ENCODE measurements at regions of chr14 and their contacts with region 1.

Region 1: DNA sequence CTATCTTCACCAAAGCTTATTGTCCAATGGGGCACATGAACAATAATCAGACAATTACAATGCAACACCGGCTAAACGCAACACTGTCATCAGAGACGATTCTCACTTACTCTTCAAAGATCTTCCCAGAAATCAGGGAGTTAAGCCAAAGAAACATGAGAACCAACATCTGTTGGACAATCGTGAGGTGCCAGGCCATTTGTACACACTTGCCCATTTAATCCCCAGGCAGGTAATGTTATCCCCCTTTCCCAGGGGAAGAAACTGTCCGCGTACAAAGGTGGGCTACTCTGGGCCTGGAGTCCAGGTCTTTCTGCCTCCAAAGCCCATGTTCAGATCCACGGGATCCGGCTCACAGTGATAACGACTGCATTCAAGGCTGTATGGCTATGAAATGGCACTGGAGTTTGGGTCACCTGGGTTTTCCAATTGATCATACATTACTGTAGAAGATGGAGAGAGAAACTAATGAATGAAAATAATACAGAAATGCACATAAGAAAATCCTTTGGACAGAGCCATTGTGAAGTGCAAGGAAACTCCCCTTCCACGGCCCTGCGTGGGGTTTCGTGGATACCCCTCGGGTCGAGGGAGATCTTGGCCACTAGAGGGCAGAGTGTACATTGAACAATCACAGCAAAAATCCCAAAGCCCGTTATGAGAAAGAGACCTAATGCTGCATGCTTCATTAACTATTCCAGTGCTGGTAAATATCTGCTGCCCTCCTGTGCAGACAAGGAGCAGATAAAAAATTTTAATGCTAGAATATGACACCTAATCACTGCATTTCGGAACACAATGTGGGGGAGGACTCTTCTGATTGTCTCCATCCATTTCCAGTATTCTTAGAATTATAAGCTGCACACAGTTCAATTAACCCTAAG is 111.4 kb downstream of the EGLN3 start:
- DNase-seq: peak; percentile 56
- H3K4me3 Mint-ChIP-seq: no peak overlapping the region
- H3K27ac Mint-ChIP-seq: no peak overlapping the region
- H3K4me1 Mint-ChIP-seq: peaks cover 11% of the 10 kb centered on the region
- H3K27me3 Mint-ChIP-seq: no peaks in the 10 kb centered on the region
- CTCF ChIP-seq: peak; percentile 76

Region 2: GRCh38 chr14:34220921-34221320 is 381.5 kb after region 1 on chr14:
- CTCF ChIA-PET with region 1: interaction called, 14 read pairs
- POLR2A ChIA-PET with region 1: no interaction called
- intact Hi-C with region 1: no loop called
- DNase-seq: no peak
- H3K4me3 Mint-ChIP-seq: no peak overlapping the region
- H3K27ac Mint-ChIP-seq: no peak overlapping the region
- H3K4me1 Mint-ChIP-seq: no peaks in the 10 kb centered on the region
- H3K27me3 Mint-ChIP-seq: no peaks in the 10 kb centered on the region
- CTCF ChIP-seq: no peak

Region 3: GRCh38 chr14:34227834-34228649 is 388.6 kb after region 1 on chr14:
- CTCF ChIA-PET with region 1: interaction called, 46 read pairs
- POLR2A ChIA-PET with region 1: interaction called, 3 read pairs
- intact Hi-C with region 1: loop called (anchors 1 kb)
- DNase-seq: peak; percentile 70
- H3K4me3 Mint-ChIP-seq: peak overlapping the region; percentile 46
- H3K27ac Mint-ChIP-seq: peak overlapping the region; percentile 50
- H3K4me1 Mint-ChIP-seq: peaks cover 31% of the 10 kb centered on the region
- H3K27me3 Mint-ChIP-seq: no peaks in the 10 kb centered on the region
- CTCF ChIP-seq: peak; percentile 76

Region 4: GRCh38 chr14:34300882-34301734 is 461.7 kb after region 1 on chr14:
- CTCF ChIA-PET with region 1: interaction called, 27 read pairs
- POLR2A ChIA-PET with region 1: interaction called, 4 read pairs
- intact Hi-C with region 1: loop called (anchors 1 kb)
- DNase-seq: peak; percentile 73
- H3K4me3 Mint-ChIP-seq: no peak overlapping the region
- H3K27ac Mint-ChIP-seq: peak overlapping the region; percentile 57
- H3K4me1 Mint-ChIP-seq: peaks cover 18% of the 10 kb centered on the region
- H3K27me3 Mint-ChIP-seq: no peaks in the 10 kb centered on the region
- CTCF ChIP-seq: peak; percentile 76